Activated B cell treated with CpG ODN at 0.5 μM for 24 hours (primary cell): ENCODE measurements at regions of chr14 and their contacts with region 1.

Region 1: GRCh38 chr14:73886449-73887317 is at the start of gene ZNF410:
- DNase-seq: peak; percentile 79
- ATAC-seq: peak; percentile 98
- H3K4me3 Mint-ChIP-seq: peak within 1 kb of the TSS; percentile 96
- H3K27ac Mint-ChIP-seq: peak within 1 kb of the TSS; percentile 96
- H3K4me1 Mint-ChIP-seq: peaks cover 42% of the 10 kb centered on the region
- H3K27me3 Mint-ChIP-seq: no peaks in the 10 kb centered on the region
- CTCF ChIP-seq: no peak
- total RNA-seq, gene ZNF410: 58.4 and 64.7 TPM in 2 replicates

Region 2: DNA sequence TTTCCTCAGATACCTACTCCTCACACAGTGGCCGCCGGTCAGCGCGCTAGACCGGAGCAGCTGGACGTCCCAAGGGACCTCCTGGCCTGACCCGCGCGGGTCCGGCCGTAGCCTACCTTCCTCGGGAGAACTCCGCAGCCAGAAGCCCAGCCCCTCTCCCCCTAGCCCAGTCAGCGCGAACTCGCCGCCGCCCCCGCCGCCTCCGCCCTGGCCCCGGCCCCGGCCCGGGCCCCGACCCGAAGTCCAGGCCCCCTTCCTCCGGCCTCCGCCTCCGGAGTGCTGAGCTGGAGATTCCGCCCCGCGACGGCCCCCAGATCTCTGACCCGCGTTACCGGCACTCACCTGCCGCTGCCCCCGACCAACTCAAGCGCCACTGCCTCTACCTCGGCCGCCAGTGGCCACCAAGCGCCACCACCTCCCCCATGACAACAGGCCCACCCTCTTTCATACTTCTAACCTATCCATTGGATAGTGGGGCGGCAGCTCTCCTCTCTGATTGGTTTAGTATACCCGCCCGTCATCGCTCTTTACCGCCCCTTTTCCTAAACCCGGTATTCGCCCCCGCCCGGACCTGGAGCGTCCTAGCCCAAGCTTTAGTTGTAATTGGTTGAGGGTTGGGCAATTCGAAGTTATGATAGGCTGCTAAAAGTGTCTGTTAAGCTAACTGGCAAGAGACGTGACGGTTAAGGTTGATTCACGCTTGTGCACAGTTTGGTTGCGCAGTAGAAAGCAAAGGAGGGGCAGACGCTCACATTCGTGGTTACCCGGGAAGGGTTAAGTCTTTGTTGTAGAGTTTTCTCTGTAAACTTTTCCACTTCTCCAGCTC is 428.3 kb before region 1 on chr14 and contains the start of gene NUMB:
- CTCF ChIA-PET with region 1: no interaction called
- POLR2A ChIA-PET with region 1: interaction called, 4 read pairs
- intact Hi-C with region 1: loop called (anchors 1 kb)
- DNase-seq: peak; percentile 74
- ATAC-seq: peak; percentile 97
- H3K4me3 Mint-ChIP-seq: peak within 1 kb of the TSS; percentile 96
- H3K27ac Mint-ChIP-seq: peak within 1 kb of the TSS; percentile 92
- H3K4me1 Mint-ChIP-seq: peaks cover 52% of the 10 kb centered on the region
- H3K27me3 Mint-ChIP-seq: no peaks in the 10 kb centered on the region
- CTCF ChIP-seq: no peak
- total RNA-seq, gene NUMB: 69.5 and 71.4 TPM in 2 replicates

Region 3: DNA sequence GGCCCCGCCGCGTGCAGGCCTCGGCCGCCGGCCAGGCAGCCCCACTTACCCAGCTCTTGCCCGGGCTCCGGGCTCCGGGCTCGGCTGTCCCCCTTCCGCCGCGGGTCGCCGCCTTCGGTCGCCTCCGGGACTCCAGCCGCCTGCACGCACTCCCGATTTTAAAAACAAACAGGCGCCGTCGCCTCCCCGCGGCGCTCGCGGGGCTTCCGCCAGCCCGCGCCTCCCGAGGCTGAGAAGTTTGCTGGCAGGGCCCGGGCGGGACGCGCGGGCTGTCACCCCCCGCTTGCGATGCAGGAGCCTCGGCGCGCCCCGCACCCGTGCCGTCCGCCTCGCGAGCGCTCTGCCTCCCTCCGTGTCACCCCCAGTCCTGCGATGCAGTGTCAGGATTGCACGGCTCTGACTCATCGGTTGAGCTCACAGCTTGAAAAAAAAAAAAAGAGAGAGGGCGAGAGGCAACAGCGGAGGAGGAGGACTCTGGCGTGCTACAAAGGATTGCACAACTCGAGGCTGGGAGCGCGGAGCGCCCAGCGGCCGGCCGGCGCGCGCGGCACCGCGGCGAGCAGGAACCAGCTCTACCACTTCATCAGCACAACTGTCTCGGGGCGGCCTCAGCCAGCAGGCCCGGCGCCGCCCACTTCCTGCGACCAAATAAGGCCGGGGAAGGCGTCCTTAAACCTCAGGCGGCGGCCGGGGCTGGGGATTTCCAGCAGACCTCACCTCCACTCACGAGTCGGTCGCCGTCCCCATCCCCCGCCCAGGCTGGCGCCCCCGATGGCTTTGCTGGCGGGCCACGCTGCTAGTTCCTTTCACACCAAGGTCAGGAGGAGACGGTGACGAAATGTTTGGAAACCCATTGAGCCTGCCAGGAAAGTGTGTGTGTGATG is 126.7 kb before region 1 on chr14:
- CTCF ChIA-PET with region 1: no interaction called
- POLR2A ChIA-PET with region 1: interaction called, 12 read pairs
- intact Hi-C with region 1: no loop called
- DNase-seq: peak; percentile 95
- ATAC-seq: peak; percentile 64
- H3K4me3 Mint-ChIP-seq: peak overlapping the region; percentile 89
- H3K27ac Mint-ChIP-seq: peak overlapping the region; percentile 99
- H3K4me1 Mint-ChIP-seq: peaks cover 86% of the 10 kb centered on the region
- H3K27me3 Mint-ChIP-seq: no peaks in the 10 kb centered on the region
- CTCF ChIP-seq: no peak

Region 4: DNA sequence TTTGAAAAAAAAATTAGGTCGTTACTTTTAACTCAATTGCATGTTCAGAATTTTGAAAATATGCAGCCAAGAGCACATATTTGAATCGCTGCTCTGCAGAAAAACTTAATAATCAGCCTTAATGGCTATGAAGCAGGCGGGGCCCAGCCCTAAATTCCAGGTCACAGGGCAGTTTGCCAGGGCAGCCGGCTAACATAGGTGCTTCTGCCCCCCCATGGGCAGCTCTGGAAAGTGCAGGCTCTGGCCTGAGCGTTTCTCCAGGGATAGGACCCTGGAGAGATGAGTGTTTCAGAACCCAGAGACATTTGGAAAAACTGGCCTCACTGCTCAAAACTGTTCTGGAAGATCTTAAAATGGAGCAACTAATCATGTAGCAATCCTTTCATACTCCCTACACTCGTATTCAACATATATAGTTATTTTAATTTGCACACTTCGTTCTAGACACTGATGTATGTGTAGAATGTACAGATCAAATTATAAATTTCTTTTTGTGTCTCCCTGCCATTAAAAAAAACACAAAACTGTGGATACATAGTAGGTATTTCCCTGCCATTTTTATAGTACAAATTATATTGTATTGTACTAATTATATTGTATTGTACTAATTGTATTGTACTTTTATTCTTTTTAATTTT is 61.0 kb before region 1 on chr14:
- CTCF ChIA-PET with region 1: no interaction called
- POLR2A ChIA-PET with region 1: interaction called, 5 read pairs
- intact Hi-C with region 1: loop called (anchors 1 kb)
- DNase-seq: peak; percentile 61
- ATAC-seq: peak; percentile 99
- H3K4me3 Mint-ChIP-seq: no peak overlapping the region
- H3K27ac Mint-ChIP-seq: no peak overlapping the region
- H3K4me1 Mint-ChIP-seq: peaks cover 6% of the 10 kb centered on the region
- H3K27me3 Mint-ChIP-seq: no peaks in the 10 kb centered on the region
- CTCF ChIP-seq: peak; percentile 96

Region 5: GRCh38 chr14:73949744-73950734 is 63.4 kb after region 1 on chr14 and contains the starts of genes COQ6 and FAM161B:
- CTCF ChIA-PET with region 1: no interaction called
- POLR2A ChIA-PET with region 1: interaction called, 7 read pairs
- intact Hi-C with region 1: loop called (anchors 1 kb)
- DNase-seq: peak; percentile 84
- ATAC-seq: peak; percentile 92
- H3K4me3 Mint-ChIP-seq: peak within 1 kb of the TSS; percentile 99
- H3K27ac Mint-ChIP-seq: peak within 1 kb of the TSS; percentile 91
- H3K4me1 Mint-ChIP-seq: peaks cover 17% of the 10 kb centered on the region
- H3K27me3 Mint-ChIP-seq: no peaks in the 10 kb centered on the region
- CTCF ChIP-seq: no peak
- total RNA-seq, gene COQ6: 23.0 and 30.7 TPM in 2 replicates
- total RNA-seq, gene FAM161B: 2.3 TPM in 2 replicates

Region 6: GRCh38 chr14:74762917-74763802 is 876.5 kb after region 1 on chr14 and contains the start of gene YLPM1:
- CTCF ChIA-PET with region 1: no interaction called
- POLR2A ChIA-PET with region 1: no interaction called
- intact Hi-C with region 1: loop called (anchors 2 kb)
- DNase-seq: peak; percentile 86
- ATAC-seq: peak; percentile 95
- H3K4me3 Mint-ChIP-seq: peak within 1 kb of the TSS; percentile 90
- H3K27ac Mint-ChIP-seq: peak within 1 kb of the TSS; percentile 90
- H3K4me1 Mint-ChIP-seq: peaks cover 55% of the 10 kb centered on the region
- H3K27me3 Mint-ChIP-seq: no peaks in the 10 kb centered on the region
- CTCF ChIP-seq: no peak
- total RNA-seq, gene YLPM1: 68.5 and 85.9 TPM in 2 replicates

Region 7: DNA sequence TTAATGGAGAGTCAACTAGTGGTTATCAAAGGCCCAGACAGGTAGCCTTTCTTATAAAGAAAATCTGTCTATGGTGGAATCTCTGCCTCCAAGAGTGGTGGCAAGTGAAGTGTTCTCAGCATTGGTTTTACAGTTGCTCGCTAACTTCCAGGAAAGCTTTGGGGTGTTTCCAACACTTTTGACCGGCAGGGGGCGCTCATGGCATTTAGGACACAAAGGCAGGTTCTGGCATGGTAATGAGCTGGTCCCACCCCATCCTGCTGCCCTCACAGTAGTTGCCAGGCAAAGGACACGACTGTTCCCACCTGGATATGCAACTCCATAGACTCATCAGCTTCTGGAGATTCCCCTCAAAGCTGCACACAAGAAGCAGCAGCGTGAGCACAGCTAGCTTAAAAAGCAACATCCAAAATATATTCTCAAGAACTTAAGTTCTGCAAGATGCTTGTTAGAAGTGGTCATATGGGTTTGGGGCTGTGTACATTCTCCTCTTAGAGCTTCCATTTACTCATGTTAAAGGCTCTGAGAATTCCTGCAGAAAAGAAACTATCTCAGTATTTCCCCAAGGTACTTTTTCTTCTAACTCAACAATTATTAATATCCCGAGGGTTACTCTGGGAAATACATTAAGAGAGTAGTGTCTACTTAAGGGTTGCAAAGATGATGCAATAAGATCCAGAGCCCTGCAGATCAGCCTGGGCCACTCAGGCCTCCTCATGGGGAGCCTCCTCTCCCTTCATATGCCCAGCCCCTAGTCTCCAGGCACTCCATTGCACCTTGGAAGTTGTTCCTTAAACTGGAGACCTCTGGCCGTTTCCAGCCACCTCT is 974.4 kb after region 1 on chr14:
- CTCF ChIA-PET with region 1: no interaction called
- POLR2A ChIA-PET with region 1: no interaction called
- intact Hi-C with region 1: no loop called
- DNase-seq: peak; percentile 82
- ATAC-seq: peak; percentile 74
- H3K4me3 Mint-ChIP-seq: no peak overlapping the region
- H3K27ac Mint-ChIP-seq: no peak overlapping the region
- H3K4me1 Mint-ChIP-seq: peaks cover 6% of the 10 kb centered on the region
- H3K27me3 Mint-ChIP-seq: no peaks in the 10 kb centered on the region
- CTCF ChIP-seq: no peak